ENCODE measurements at regions of chr6 and their contacts with region 1.

Region 1: DNA sequence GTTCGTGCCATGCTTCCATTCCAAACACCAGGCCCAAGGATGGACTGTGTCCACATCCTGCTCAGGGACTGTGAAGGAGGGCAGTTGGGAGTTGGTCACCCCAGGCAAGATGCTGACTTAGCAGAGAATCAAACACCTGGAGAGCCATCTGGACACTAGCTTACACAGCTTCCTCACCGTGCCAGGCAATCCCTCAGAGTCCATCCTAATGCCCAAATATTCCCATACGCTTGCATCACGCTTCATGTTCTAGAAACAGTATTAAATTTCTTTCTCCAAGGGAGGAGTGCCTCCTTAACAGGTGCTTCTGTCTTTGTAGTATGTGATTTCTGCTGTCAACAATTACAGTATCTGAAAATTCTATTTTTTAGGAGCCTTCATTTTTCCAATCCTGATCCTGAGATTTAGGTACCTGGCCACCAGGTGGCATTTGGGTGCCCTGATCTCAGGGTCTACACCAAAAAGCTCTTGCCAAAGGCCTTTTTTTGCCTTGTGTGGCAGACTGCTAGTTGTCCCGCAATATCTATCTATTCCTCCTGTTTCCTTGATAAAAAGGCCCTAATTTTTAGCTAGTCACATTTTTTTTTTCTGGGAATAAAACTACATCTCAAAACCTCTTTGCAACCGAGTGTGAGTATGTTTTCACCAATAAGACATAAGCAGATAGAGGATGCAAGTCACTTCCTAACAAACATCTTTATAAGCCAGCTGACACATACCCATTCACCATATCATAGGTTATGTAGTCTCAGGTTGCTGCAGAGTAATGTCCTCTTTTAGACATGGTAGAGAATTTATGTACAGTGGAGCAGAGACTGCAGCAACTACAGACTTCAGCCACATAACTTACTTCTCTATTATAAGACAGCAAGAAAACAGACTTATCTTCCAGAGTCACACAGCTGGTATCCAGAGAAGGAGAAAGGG is 85.0 kb downstream of the PREP start:
- DNase-seq: no peak
- H3K4me3 Mint-ChIP-seq: no peak overlapping the region
- H3K27ac Mint-ChIP-seq: no peak overlapping the region
- H3K4me1 Mint-ChIP-seq: no peaks in the 10 kb centered on the region
- H3K27me3 Mint-ChIP-seq: no peaks in the 10 kb centered on the region

Region 2: GRCh38 chr6:105402939-105403935 is 85.4 kb after region 1 on chr6 and contains the start of gene PREP:
- CTCF ChIA-PET with region 1: interaction called, 10 read pairs
- POLR2A ChIA-PET with region 1: no interaction called
- DNase-seq: peak; percentile 88
- H3K4me3 Mint-ChIP-seq: peak within 1 kb of the TSS; percentile 92
- H3K27ac Mint-ChIP-seq: peak within 1 kb of the TSS; percentile 75
- H3K4me1 Mint-ChIP-seq: peaks cover 51% of the 10 kb centered on the region
- H3K27me3 Mint-ChIP-seq: peaks cover 10% of the 10 kb centered on the region
- total RNA-seq, gene PREP: 43.7 to 44.3 TPM

Region 3: DNA sequence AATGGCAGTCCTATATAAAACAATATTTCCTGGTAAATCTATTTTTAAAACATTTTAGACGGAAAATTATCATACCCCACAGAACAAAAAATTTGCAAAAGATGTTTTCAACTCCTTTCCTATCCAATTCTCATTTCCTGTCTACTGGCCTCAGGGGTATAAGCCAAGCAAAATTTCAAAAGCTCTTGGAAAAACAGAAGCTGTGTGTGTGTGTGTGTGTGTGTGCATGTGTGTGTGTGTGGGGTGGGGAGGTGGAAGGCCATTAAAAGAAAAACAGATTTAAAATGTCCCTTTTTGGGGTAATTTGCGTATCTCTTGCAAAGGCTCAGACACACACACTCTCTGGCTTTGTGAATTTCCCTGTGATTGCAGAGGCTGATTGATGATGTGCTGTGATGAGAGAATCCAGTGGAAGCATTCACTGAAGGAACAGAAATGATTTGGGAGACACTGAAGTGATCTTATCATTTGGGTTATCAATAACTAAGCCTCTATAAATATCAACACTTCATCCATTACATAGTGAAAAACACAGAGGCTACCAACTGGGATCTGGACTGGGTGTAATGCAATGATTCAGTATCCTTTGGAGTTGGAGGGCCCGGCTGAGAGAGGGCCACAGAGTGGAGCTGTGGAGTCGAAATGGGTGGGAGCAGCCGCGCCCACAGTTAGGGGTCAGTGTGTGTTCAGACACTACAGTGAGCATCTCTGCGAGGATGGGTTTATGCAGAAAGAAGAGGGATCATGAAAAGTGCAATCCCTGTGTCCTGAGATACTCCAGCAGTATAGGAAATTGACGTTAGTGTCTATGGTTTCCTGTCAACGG is 191.8 kb after region 1 on chr6:
- CTCF ChIA-PET with region 1: no interaction called
- POLR2A ChIA-PET with region 1: no interaction called
- DNase-seq: no peak
- H3K4me3 Mint-ChIP-seq: no peak overlapping the region
- H3K27ac Mint-ChIP-seq: no peak overlapping the region
- H3K4me1 Mint-ChIP-seq: peaks cover 20% of the 10 kb centered on the region
- H3K27me3 Mint-ChIP-seq: peaks cover 2% of the 10 kb centered on the region

Measured in activated CD4-positive, alpha-beta memory T cell treated with anti-CD3 and anti-CD28 coated beads, Interleukin-2, amount 10 ng/mL, durations not matched to agents 7 days and 5 days (primary cell).